Posterior cingulate gyrus (tissue), 11 donors: ENCODE measurements at regions of chr2 and their contacts with region 1.

Region 1: DNA sequence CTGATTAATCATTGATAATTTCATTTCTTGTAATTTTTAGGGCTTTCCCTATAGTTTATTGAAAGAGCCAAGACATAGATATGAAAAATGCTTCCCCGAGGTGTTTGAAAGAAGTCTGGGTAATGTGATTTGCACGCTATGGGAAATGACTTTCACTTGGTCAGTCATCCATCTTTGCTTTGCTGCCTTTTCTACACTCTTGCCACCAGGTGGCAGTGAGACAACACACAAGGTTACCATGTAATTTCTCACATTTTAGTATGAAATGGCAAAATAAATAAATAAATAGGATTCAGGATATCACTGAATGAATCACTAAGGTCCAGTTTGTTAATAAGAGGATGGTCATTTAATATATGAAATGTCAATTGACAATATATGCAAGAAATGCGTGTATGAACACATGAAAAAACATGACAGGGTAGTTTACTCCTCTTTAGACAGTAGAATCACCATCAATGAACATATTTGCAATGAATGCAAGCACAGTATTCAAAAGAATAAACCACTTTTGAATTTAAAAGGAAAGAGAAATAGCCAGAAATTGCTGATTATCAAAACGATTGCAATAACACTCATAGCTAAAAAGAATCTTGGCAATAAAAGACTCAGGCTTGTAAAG is 52.2 kb upstream of the KCNH7 start:
- DNase-seq: peak in 2 of 10 donors; percentile 9 to 23

Region 2: GRCh38 chr2:162196638-162197037 is 694.2 kb before region 1 on chr2:
- intact Hi-C with region 1: no loop called
- DNase-seq: no peak

Region 3: DNA sequence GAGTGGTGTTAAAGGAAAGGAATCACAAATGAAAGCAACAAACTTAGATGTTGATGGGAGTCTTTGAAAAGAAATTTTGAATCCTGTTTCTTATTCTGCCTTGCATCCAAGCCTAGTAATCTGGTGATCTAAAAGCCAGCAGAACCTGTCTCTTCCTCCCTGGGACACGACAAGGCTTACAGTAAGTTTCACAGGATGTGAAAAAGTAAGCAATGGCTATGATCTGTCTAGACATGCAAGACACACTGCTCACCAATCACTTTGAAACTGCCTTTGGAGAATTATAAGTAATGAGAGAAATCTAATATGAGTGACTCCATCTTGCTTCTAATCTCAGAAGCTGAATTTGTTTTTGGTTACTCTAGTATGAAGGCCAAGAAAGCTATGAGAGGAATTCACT is 155.9 kb before region 1 on chr2:
- intact Hi-C with region 1: no loop called
- DNase-seq: no peak

Region 4: GRCh38 chr2:162768652-162769051 is 122.1 kb before region 1 on chr2:
- intact Hi-C with region 1: no loop called
- DNase-seq: peak in 5 of 10 donors; percentile 16 to 77 (median 57)

Region 5: GRCh38 chr2:163132850-163133249 is 242.0 kb after region 1 on chr2:
- intact Hi-C with region 1: loop called (anchors 5 kb)
- DNase-seq: no peak